ENCODE measurements at regions of chr2 and their contacts with region 1.

Region 1: GRCh38 chr2:29115797-29116781 is 874 bp downstream of the CLIP4 start:
- DNase-seq: peak; percentile 86
- ATAC-seq: peak; percentile 62
- H3K4me3 Mint-ChIP-seq: peak overlapping the region; percentile 80
- H3K27ac Mint-ChIP-seq: peak overlapping the region; percentile 91
- H3K4me1 Mint-ChIP-seq: peaks cover 49% of the 10 kb centered on the region
- H3K27me3 Mint-ChIP-seq: peaks cover 16% of the 10 kb centered on the region

Region 2: GRCh38 chr2:29130295-29130694 is 14.2 kb after region 1 on chr2:
- CTCF ChIA-PET with region 1: interaction called, 35 read pairs
- POLR2A ChIA-PET with region 1: interaction called, 9 read pairs
- DNase-seq: no peak
- ATAC-seq: peak; percentile 49
- H3K4me3 Mint-ChIP-seq: no peak overlapping the region
- H3K27ac Mint-ChIP-seq: peak overlapping the region; percentile 3
- H3K4me1 Mint-ChIP-seq: peaks cover 13% of the 10 kb centered on the region
- H3K27me3 Mint-ChIP-seq: no peaks in the 10 kb centered on the region

Region 3: DNA sequence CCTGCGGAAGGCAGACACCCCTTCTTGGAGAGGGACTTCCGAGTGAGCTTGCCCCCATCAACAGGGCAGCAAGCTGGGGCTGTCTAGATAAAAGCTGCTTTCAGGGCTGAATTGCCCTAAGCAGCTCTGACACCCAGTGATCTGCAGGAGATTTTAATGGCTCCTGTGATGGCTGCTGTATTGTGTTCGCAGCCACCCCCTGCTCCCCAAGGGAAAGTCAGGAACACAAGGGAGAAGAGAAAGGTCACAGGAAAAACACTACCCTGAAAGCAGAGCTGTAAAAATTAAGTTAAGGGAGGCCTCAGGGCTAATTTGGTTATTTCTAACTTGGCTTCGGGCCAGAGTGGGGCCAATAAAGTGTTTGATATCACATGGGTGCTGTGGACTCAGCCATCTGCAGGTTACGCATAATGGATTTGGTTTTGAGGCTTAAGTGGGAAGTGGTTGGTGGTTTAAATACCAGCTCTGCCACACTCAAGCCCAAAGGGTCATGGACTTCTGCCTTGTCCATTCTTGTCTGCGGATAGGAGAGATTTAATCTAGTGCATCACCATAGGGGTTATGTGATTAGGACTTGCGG is 146.7 kb after region 1 on chr2:
- CTCF ChIA-PET with region 1: no interaction called
- POLR2A ChIA-PET with region 1: no interaction called
- DNase-seq: no peak
- ATAC-seq: no peak
- H3K4me3 Mint-ChIP-seq: no peak overlapping the region
- H3K27ac Mint-ChIP-seq: no peak overlapping the region
- H3K4me1 Mint-ChIP-seq: no peaks in the 10 kb centered on the region
- H3K27me3 Mint-ChIP-seq: peaks cover 19% of the 10 kb centered on the region